ENCODE measurements at regions of chr4 and their contacts with region 1.

Region 1: DNA sequence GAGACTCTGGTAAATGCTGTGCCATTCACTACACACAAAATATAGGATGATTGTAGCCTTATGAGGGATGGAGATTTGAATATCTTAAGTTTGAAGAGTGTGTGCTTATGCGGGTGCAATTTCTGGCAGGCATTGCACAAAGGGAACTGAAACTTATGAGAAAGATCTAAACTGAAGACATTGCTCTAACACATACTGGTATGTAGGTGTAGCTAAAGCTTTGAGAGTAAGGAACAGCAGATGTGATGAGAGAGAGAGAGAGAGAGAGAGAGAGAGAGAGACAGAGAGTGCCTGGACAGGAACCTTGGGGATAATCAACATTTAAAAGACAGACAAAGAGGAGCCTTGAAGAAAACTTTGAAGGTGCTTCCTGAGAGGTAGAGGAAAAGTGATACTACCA is 379.7 kb downstream of the SPRY1 start:
- DNase-seq: no peak
- H3K4me3 ChIP-seq: no peak overlapping the region
- H3K27ac ChIP-seq: no peak overlapping the region
- H3K4me1 ChIP-seq: no peaks in the 10 kb centered on the region
- H3K27me3 ChIP-seq: no peaks in the 10 kb centered on the region
- CTCF ChIP-seq: no peak

Region 2: DNA sequence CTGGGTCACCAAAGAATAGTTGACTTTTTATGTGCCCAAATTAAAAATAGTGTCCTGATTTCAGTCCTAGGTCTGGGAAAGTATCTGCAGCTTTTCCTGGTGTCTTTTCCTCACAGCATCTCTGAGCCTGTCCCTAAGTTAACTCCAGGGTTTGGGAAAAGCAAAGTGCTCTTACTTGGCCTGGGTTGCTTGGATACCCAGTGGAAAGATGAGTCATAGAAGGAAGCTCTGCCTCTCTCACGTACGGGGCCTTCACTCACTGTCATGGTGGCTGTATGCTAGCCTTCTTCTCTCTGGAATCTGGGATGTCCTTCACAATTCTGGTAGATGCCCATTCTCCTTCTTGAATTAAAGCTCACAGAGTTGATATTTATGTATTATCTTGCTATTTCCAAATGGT is 329.0 kb after region 1 on chr4:
- intact Hi-C with region 1: loop called (anchors 10 kb)
- DNase-seq: no peak
- H3K4me3 ChIP-seq: no peak overlapping the region
- H3K27ac ChIP-seq: no peak overlapping the region
- H3K4me1 ChIP-seq: no peaks in the 10 kb centered on the region
- H3K27me3 ChIP-seq: no peaks in the 10 kb centered on the region
- CTCF ChIP-seq: no peak